RWPE1 (cell line): ENCODE measurements at regions of chr20 and their contacts with region 1.

Region 1: DNA sequence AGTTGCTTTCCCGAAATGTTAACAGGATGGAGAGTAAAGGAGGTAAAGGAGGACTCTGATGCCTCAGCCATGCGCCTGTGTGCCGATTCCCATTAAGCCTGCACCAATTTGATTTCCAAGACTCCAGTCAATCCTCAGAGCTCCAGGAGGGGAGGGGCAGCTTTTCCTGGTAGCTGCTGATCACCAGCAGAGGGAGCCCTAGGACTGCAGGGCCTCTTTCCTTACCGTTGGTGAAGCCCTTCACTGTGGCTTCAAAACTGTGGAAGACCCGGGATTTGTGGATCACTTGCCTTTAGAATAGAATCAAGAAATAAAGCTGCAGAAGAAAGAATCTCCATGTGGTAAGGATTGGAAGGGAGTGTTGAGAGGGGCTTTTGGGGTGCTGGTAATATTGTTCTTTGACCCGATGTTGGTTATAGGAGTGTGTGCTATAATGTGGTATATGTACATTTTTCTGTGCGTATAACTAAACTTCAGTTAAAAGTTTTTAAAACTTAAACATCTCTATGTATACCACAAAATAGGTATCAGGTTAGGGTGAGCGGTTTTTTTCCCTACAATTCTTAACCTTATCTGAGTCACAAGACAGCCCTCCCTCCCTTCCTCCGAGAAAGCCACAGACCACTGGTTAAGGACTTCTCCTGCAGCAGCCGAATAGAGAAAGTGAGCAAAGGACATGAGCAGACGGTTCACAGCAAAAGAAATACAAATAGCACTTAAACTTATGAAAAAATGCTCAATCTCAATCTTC is 6.9 kb upstream of the OSER1 start:
- DNase-seq: peak; percentile 82
- H3K27ac ChIP-seq: no peak overlapping the region
- CTCF ChIP-seq: peak; percentile 98

Region 2: DNA sequence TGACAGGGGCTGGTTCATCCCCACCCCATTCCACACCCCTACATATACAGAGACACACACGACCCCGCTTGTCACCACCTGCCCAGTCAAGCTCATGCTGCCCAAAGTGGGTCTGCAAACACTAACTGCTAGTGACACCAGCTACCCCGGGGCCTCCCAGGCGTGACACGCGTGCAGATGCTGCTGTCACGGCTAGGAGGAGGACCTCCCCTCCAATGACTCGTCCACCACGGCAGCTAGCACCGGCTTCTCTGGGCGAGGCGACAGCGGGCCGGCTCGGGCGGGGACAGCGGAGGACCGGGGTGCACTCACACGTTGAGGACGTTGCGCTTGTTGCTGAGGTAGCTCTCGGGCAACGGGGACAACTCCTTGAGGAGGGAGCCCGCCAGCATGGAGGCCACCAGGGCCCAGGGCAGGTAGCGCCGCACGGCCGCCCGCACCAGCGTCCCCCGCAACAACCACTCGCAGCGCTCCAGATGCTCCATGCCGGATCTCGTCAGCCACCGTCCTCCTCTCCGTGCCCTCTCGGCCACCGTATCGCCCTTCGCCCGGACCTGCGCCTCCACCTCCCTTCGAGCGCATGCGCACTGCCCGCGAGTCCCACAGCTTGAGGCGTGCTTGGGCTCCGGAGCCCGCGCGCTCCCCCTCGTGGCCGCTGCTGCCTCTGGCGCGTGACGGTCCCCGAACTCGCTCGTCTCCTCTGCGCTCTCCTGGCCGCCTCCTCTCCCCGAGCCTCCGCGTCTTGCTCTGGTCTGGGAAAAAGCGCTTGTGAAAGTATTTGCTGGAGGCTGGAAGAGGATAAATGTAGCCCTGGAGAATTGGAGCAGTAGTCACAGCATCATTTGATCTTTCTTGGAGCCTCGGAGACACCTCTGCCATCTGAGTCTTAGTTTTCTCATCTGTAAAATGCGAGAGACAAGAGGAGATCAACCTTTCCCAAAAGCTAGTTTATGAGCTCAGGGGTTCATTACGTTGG is 93.4 kb after region 1 on chr20 and contains the start of gene FITM2:
- CTCF ChIA-PET with region 1: interaction called, 145 read pairs
- POLR2A ChIA-PET with region 1: interaction called, 7 read pairs
- DNase-seq: peak; percentile 100
- H3K27ac ChIP-seq: peak within 1 kb of the TSS; percentile 67
- CTCF ChIP-seq: peak; percentile 100

Region 3: DNA sequence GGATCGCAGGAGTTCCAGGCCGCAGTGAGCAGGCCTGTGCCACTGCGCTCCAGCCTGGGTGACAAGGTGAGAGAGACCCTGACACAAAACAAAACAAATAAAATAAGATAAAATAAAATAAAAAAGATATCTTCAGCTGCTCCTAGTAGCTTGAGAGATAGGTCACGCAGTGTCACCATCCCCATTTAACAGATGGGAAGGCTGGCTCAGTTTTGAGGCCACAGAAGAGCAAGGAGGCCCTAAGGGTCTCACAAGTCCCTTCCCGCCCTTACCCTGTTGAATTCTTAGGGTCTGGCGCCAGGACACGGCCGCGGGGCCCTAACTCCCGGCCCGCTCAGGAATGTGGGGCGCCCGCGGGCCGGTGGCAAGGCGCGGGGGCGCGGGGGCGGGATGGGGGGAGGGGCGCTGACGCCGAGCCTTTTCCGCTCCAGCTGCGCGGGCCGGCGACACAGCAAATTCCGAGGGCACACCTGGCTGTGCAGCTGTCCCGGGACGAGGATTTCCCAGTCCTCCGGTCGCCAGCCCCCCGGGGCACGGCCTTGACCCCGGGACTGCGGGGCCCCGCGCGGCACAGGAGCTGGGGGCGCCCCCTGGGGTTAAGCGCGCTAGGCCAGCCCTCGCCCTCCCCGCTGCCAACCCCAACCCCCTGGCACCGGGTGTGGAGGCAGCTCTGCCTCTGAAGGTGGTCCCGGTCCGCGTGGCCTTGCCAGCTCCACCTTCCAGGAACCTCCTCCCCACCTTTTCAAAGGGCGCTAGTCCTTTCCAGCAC is 109.1 kb after region 1 on chr20:
- CTCF ChIA-PET with region 1: interaction called, 10 read pairs
- POLR2A ChIA-PET with region 1: no interaction called
- DNase-seq: no peak
- H3K27ac ChIP-seq: no peak overlapping the region
- CTCF ChIP-seq: no peak

Region 4: GRCh38 chr20:44609511-44610312 is 392.2 kb after region 1 on chr20:
- CTCF ChIA-PET with region 1: interaction called, 14 read pairs
- POLR2A ChIA-PET with region 1: no interaction called
- DNase-seq: peak; percentile 97
- H3K27ac ChIP-seq: peak overlapping the region; percentile 64
- CTCF ChIP-seq: peak; percentile 100